CD8-positive, alpha-beta T cell (primary cell): ENCODE measurements at regions of chr3 and their contacts with region 1.

Region 1: DNA sequence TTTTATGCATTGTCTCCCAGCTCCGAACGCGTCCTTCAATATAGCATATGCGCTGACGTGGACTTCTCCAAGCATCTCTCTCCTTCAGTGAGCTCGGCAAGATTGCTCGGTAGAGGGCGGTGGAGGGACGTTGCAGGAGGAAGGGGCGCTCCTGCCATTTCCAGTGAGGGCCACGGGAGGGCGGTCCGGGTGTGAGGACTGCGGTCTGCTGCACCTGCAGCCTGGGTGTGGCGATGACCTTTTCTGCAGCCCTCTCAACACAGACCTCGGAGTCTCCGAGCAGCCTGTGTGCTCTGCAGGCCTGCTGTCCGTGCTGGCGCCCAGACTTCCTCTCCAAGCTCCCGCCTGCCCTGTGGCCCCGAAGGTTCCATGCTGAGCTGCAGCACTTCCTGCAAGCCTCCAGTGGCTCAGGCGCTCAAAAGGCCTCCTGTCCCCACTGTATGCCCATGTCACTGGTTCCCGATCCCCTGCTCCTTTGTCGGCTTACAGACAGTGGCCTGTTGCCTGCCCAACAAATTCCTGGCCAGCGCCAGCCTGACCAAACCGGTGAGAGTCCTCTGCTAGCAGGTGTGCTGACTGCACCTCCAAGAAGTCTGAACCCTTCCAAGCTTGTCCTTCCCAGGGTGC is 8.9 kb upstream of the RTP3 start:
- DNase-seq: peak; percentile 88 to 96 (median 93)
- ATAC-seq: peak; percentile 97
- H3K4me3 ChIP-seq: peak overlapping the region; percentile 19 to 39
- H3K4me3 Mint-ChIP-seq: peak overlapping the region; percentile 69
- H3K27ac ChIP-seq: no peak overlapping the region
- H3K27ac Mint-ChIP-seq: peak overlapping the region; percentile 81
- H3K4me1 ChIP-seq: peaks cover 8% of the 10 kb centered on the region
- H3K4me1 Mint-ChIP-seq: peaks cover 18% of the 10 kb centered on the region
- H3K27me3 ChIP-seq: no peaks in the 10 kb centered on the region
- H3K27me3 Mint-ChIP-seq: no peaks in the 10 kb centered on the region
- CTCF ChIP-seq: peak; percentile 100

Region 2: GRCh38 chr3:46368569-46368968 is 120.3 kb before region 1 on chr3:
- CTCF ChIA-PET with region 1: interaction called, 15 read pairs
- POLR2A ChIA-PET with region 1: no interaction called
- intact Hi-C with region 1: no loop called
- DNase-seq: peak; percentile 35 to 89 (median 65)
- ATAC-seq: peak; percentile 72
- H3K4me3 ChIP-seq: no peak overlapping the region
- H3K4me3 Mint-ChIP-seq: peak overlapping the region; percentile 43
- H3K27ac ChIP-seq: peak overlapping the region in 1 of 2 experiments; percentile 82
- H3K27ac Mint-ChIP-seq: peak overlapping the region; percentile 81
- H3K4me1 ChIP-seq: peaks cover 23% of the 10 kb centered on the region
- H3K4me1 Mint-ChIP-seq: peaks cover 52% of the 10 kb centered on the region
- H3K27me3 ChIP-seq: no peaks in the 10 kb centered on the region
- H3K27me3 Mint-ChIP-seq: no peaks in the 10 kb centered on the region
- CTCF ChIP-seq: peak; percentile 53

Region 3: DNA sequence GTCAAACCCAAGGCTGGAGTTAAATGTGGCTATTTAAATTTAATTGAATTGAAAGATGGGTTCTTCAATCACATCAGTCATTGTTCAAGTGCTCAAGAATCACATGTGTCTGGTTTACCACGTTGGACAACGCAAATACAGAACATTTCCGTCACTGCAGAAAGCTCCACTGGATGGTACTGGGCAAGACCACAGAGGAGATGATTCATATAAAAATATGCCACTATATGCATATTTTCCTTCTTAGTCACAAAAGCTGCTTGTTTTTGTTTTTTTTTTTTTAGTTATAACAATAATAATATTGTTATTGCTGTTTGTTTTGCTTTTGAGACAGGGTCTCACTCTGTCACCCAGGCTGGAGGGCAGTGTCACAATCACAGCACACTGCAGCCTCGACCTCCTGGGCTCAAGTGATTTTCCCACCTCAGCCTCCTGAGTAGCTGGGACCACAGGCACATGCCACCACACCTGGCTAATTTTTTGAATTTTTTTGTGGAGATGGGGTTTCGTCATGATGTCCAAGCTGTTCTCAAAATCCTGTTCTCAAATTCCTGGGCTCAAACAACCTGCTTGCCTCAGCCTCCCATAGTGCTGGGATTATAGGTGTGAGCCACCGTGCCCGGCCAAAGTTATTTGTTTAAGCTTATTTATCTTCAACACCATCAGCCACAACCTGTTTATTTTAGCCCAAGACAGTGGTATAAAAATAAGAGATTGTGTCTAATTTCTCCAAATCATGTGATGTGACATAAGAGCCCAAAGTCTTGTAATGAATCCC is 28.4 kb after region 1 on chr3:
- CTCF ChIA-PET with region 1: interaction called, 16 read pairs
- POLR2A ChIA-PET with region 1: no interaction called
- intact Hi-C with region 1: no loop called
- DNase-seq: peak in 1 of 9 experiments; percentile 15
- ATAC-seq: no peak
- H3K4me3 ChIP-seq: no peak overlapping the region
- H3K4me3 Mint-ChIP-seq: no peak overlapping the region
- H3K27ac ChIP-seq: no peak overlapping the region
- H3K27ac Mint-ChIP-seq: no peak overlapping the region
- H3K4me1 ChIP-seq: no peaks in the 10 kb centered on the region
- H3K4me1 Mint-ChIP-seq: no peaks in the 10 kb centered on the region
- H3K27me3 ChIP-seq: no peaks in the 10 kb centered on the region
- H3K27me3 Mint-ChIP-seq: peaks cover 3% of the 10 kb centered on the region
- CTCF ChIP-seq: no peak

Region 4: GRCh38 chr3:46558184-46559043 is 69.6 kb after region 1 on chr3:
- CTCF ChIA-PET with region 1: interaction called, 301 read pairs
- POLR2A ChIA-PET with region 1: interaction called, 27 read pairs
- intact Hi-C with region 1: loop called (anchors 1 kb)
- DNase-seq: peak; percentile 37 to 89 (median 76)
- ATAC-seq: peak; percentile 97
- H3K4me3 ChIP-seq: peak overlapping the region; percentile 13 to 41
- H3K4me3 Mint-ChIP-seq: peak overlapping the region; percentile 80
- H3K27ac ChIP-seq: no peak overlapping the region
- H3K27ac Mint-ChIP-seq: peak overlapping the region; percentile 80
- H3K4me1 ChIP-seq: peaks cover 5% of the 10 kb centered on the region
- H3K4me1 Mint-ChIP-seq: peaks cover 17% of the 10 kb centered on the region
- H3K27me3 ChIP-seq: no peaks in the 10 kb centered on the region
- H3K27me3 Mint-ChIP-seq: no peaks in the 10 kb centered on the region
- CTCF ChIP-seq: peak; percentile 97

Region 5: GRCh38 chr3:46585799-46586693 is 97.2 kb after region 1 on chr3:
- CTCF ChIA-PET with region 1: interaction called, 17 read pairs
- POLR2A ChIA-PET with region 1: no interaction called
- intact Hi-C with region 1: no loop called
- DNase-seq: no peak
- ATAC-seq: no peak
- H3K4me3 ChIP-seq: no peak overlapping the region
- H3K4me3 Mint-ChIP-seq: no peak overlapping the region
- H3K27ac ChIP-seq: no peak overlapping the region
- H3K27ac Mint-ChIP-seq: no peak overlapping the region
- H3K4me1 ChIP-seq: no peaks in the 10 kb centered on the region
- H3K4me1 Mint-ChIP-seq: no peaks in the 10 kb centered on the region
- H3K27me3 ChIP-seq: no peaks in the 10 kb centered on the region
- H3K27me3 Mint-ChIP-seq: peaks cover 2% of the 10 kb centered on the region
- CTCF ChIP-seq: no peak

Region 6: DNA sequence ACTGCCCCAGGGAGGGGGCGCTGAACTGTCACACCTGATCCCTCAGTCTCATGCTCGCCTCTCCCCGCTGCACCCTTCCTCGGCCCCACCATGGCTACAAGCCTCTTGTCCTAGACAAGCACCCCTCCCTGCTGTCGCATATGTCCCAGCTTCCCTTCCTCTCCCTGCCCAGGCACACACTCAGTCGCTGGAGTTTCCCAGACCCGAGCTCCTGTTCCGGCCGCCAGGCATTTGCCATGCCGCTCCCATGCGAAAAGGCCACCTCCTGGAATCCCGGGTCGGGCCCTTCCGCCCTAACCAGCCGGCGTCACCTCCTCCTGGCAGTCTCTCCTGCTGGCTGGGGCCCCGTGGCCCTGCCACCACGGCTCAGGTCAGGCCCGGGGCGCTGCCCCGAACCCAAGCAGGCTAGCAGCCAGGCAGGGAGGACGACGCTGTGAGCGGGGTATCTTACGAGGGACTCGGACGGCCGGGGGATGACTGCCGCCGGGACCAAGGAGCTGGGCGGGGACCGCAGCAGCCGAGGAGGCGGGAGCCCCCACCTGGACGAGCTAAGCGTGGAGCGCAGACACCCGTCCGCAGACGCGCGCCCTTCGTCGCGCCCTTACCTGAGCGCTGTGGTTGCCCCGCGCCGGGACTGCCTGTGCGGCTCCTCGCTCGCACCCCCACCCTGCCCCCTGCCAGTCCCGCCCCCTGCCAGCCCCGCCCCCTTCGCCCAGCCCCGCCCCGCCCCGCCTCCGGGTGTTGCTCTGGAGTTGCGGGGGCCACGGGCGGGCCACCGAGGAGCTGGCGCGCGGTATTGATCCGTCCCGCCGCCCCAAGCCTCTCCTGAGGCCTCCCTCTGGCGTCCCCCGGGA is 204.4 kb after region 1 on chr3 and contains the start of gene ALS2CL:
- CTCF ChIA-PET with region 1: interaction called, 3 read pairs
- POLR2A ChIA-PET with region 1: no interaction called
- intact Hi-C with region 1: loop called in 1 of 2 experiments (anchors 2 kb)
- DNase-seq: peak; percentile 50 to 84 (median 76)
- ATAC-seq: peak; percentile 83
- H3K4me3 ChIP-seq: peak within 1 kb of the TSS; percentile 65 to 76
- H3K4me3 Mint-ChIP-seq: peak within 1 kb of the TSS; percentile 89
- H3K27ac ChIP-seq: peak within 1 kb of the TSS in 1 of 2 experiments; percentile 21
- H3K27ac Mint-ChIP-seq: peak within 1 kb of the TSS; percentile 85
- H3K4me1 ChIP-seq: peaks cover 55% of the 10 kb centered on the region
- H3K4me1 Mint-ChIP-seq: peaks cover 48% of the 10 kb centered on the region
- H3K27me3 ChIP-seq: no peaks in the 10 kb centered on the region
- H3K27me3 Mint-ChIP-seq: no peaks in the 10 kb centered on the region
- CTCF ChIP-seq: no peak
- total RNA-seq, gene ALS2CL: 6.8 to 7.5 TPM